GM10248 (cell line): ENCODE measurements at regions of chr20 and their contacts with region 1.

Region 1: DNA sequence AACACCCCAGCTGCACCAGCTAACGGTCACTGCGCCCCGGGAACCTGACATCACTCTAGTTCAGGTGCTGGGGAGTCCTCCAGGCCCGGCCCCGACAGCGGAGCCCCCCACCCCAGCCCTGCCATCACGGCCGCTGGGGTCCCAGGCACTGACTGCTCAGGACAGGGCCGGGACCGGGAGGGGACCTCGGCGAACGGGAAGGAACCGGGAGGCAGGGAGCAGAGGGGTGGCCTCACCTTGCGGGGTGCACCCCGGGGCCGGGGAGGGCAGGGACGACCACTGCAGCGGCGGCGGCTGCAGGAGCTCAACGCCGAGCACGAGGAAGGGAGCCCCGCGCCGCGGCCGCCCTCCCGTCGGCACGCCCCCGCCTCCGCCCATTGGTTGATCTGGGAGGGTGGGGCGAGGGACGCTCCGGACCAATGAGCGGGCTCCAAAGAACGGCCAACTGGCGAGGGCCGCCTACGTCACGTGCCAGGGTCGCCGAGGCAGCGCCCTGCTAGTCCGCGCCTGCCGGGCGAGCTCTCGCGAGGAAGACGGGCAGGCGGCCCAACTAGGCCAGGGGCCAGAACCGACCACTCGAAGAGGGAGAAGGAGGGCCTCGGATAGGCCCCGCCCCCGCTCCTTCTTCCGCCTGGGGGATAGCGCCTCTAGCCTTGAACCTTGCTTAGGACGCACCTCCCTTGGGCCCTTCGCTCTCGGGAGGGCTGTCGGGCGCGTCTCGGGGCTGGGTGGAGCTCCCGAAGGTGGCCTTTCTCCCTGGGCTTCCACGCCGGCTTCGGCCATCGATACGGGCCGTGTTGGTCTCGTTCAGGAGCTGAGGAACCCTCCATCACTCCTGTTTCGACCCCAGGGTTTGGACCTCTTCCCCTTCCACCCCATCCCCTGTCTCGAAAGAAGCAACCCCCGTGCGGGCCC is at the start of gene ADISSP:
- DNase-seq: peak; percentile 100
- CTCF ChIP-seq: peak; percentile 21

Region 2: DNA sequence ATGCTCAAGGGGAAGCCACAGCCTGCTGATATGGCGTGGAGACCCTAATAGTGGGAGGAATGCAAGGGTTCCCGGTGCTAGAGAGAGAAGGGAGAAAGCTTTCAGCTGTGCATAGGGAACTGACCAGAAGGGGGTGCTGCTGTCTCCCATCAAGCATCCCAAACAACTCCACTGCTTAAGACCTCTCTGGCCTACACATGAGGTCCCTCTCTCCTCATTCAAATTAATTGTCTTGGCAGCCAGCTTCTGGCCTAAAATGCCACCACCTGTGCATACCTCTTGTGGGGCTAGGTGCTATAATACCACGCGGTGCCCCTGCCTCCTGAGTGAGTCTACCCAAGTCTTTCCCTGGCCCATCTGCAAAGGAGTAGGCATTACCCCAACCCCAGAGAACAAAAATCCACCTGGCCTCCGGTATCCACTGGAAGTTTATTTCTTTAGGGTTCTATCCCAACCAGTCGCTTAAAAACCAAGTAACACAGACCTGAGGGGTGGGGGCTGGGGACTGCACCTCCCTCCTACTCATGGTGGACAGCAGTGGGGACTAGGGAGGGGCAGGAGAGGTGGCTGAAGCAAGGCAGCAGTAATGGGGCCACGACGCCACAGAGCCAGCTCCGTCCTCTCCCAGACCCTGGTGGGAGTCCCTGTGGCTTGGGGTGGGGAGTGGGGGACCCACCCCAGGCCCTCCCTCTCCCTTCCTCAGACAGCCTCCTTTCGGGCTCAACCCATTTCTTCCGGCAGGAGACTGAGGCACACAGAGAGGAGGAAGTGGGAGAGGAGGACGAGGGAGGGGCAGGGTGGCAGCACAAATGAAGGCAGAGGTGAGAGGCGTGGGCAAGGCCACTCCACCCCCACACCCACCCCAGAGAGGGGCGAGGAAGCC is 14.3 kb before region 1 on chr20:
- CTCF ChIA-PET with region 1: interaction called, 60 read pairs
- POLR2A ChIA-PET with region 1: interaction called, 4 read pairs
- DNase-seq: peak; percentile 82
- CTCF ChIP-seq: peak; percentile 48

Region 3: DNA sequence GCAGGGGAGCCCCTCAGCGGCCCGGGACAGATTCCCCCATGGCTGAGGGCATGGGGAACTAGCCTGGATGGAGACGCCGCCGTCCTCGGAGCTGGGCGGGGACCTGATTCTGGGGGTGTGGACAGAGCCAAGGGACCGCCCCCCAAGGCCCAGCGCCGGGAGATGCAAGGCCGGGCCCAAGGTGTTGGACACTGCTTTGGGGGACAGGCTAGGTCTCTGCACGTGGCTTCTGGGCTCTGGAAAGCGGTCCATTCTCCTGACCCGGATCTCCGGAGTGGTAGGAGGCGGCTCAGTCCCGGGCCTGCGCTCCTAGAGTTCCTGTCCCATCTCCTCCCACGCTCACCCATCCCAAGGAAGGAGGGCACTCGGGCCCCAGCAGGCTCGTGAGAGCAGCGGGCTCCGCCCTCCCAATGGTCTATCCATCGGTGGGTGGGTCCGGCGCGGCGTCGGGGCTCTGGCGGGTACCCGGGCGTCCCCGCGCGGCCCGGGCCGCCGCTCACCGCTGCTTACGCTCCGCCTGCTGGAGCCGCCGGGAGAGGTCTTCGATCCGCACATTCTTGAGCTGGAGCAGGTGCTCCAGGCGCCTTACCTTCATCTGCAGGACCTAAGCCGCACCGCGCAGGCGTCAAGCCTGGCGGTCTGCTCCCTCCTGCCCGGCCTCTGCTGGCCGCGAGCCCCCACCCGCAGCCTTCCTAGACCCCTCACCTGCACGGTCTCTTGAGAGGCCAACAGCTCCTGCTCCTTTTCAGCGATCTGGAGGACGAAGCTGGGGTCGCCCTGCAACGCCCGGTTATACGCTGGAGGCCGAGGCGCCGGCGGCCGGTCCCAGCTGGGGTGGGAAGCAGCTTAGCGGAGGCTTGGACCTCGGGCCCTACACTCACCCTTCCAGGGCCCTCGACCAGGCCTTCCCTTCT is 10.3 kb after region 1 on chr20:
- CTCF ChIA-PET with region 1: interaction called, 30 read pairs
- POLR2A ChIA-PET with region 1: interaction called, 6 read pairs
- DNase-seq: peak; percentile 62
- CTCF ChIP-seq: no peak

Region 4: DNA sequence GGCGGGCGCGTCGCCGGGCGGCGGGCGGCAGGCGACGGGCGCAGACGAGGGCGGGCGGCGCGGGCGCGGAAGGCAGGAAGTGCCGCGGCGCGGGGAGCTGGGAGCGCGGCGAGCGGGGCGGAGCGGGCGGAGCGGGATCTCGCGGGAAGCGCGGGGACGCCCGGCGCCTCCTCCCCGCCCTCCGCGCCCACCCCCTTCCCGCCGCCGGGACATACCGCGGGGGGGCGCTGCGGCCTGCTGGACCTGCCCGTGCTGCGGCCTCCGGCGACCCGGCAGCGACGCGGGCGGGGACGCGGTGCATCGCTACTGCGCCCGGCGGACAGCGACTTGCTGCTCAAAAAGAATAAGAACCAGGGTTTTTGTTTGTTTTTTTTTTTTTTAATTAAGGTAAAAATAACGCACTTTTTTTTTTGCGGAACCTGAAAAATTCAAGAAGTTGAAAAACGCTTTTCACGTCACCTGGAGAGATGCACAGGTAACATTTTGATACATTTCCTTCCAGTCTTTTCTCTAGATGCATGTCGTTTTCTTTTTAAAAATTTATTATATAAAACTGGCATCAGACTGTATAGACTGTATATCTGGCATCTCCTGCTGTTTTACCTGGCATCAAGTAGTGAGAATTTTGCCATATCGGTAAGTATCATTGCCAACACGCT is 19.1 kb after region 1 on chr20 and contains the start of gene CENPB:
- CTCF ChIA-PET with region 1: interaction called, 20 read pairs
- POLR2A ChIA-PET with region 1: interaction called, 6 read pairs
- DNase-seq: peak; percentile 95
- CTCF ChIP-seq: peak; percentile 71

Region 5: GRCh38 chr20:3932681-3933080 is 165.0 kb after region 1 on chr20:
- CTCF ChIA-PET with region 1: no interaction called
- POLR2A ChIA-PET with region 1: no interaction called
- DNase-seq: no peak
- CTCF ChIP-seq: no peak

Region 6: GRCh38 chr20:4673371-4674001 is 905.8 kb after region 1 on chr20:
- CTCF ChIA-PET with region 1: no interaction called
- POLR2A ChIA-PET with region 1: no interaction called
- DNase-seq: no peak
- CTCF ChIP-seq: no peak